Heart right ventricle (tissue), 16 donors: ENCODE measurements at regions of chr2 and their contacts with region 1.

Region 1: DNA sequence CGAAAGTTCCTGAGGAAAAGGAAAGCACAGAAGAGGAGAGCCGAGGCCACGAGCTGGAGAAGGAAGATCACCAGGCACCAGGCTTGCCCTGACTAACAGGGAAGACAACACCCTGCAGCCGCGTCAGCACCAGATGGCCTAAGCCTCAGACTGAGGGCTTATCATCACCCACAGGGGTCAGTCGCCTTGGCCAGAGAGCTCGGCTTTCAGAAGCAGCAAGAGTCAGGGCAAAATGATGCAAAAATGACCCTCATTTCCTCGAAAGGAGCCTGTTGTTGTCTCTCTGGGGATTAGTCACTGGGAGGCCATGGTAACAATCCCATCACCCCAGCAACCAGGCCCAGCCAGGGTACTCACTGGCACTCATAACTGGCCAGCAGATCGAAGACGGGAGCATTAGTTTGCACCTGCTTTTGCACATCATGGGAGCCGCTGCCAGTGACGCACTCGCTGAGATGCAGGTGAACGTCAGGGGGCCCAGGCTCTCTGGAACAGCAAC is 42.7 kb upstream of the ZFP36L2 start:
- DNase-seq: peak; percentile 79 to 80
- ATAC-seq: peak; percentile 73 to 85 (median 79)
- H3K4me3 ChIP-seq: peak overlapping the region in 3 of 10 donors; percentile 2 to 21 (median 12)
- H3K27ac ChIP-seq: peak overlapping the region; percentile 63 to 86 (median 75)
- H3K4me1 ChIP-seq: peaks cover 23 to 73% (median 68%) of the 10 kb centered on the region in 9 donors
- H3K27me3 ChIP-seq: no peaks in the 10 kb centered on the region
- CTCF ChIP-seq: peak in 4 of 9 donors; percentile 15 to 35 (median 22)

Region 2: GRCh38 chr2:43194121-43194869 is 74.8 kb before region 1 on chr2:
- intact Hi-C with region 1: no loop called
- DNase-seq: no peak
- ATAC-seq: no peak
- H3K4me3 ChIP-seq: peak overlapping the region in 1 of 10 donors; percentile 12
- H3K27ac ChIP-seq: peak overlapping the region in 1 of 10 donors; percentile 81
- H3K4me1 ChIP-seq: peaks cover 0 to 39% (median 0%) of the 10 kb centered on the region in 9 donors
- H3K27me3 ChIP-seq: no peaks in the 10 kb centered on the region
- CTCF ChIP-seq: no peak

Region 3: DNA sequence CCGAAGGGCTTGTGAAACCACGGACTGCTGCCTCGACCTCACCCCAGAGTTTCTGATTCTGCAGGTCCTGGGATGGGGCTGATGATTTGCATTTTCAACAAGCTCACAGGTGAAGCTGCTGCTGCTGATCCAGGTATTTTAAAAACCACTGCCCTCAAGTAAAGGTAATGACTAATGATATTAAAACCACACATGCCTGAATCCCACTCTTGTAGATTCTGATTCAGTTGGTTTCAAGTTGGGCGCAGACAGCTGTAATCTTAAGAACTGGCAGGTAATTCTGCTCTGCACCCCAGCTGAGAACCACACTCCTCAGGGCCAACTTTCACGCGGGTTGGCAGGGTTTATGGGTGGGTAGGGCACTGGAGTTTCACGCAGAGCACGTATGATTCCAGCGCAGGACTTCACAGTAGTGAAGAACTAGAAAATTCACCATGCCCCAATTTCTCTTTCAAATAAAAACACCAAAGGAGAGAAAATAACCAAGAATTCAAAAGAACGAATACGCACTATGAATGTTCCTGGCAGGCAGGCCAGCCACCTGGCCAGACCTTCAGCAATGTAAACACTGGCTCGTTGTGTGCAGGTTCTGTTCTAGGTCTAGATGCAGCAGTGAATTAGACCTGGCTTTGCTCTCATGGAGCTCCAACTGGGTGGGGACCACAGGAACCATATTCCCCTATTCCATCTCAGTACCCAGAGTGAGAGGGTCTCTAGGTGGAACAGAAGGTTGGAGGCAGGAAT is 31.9 kb after region 1 on chr2:
- intact Hi-C with region 1: loop called in 1 of 10 experiments (anchors 5 kb)
- DNase-seq: no peak
- ATAC-seq: no peak
- H3K4me3 ChIP-seq: no peak overlapping the region
- H3K27ac ChIP-seq: peak overlapping the region in 3 of 10 donors; percentile 19 to 90 (median 38)
- H3K4me1 ChIP-seq: peaks cover 10 to 56% (median 36%) of the 10 kb centered on the region in 9 donors
- H3K27me3 ChIP-seq: no peaks in the 10 kb centered on the region
- CTCF ChIP-seq: no peak

Region 4: DNA sequence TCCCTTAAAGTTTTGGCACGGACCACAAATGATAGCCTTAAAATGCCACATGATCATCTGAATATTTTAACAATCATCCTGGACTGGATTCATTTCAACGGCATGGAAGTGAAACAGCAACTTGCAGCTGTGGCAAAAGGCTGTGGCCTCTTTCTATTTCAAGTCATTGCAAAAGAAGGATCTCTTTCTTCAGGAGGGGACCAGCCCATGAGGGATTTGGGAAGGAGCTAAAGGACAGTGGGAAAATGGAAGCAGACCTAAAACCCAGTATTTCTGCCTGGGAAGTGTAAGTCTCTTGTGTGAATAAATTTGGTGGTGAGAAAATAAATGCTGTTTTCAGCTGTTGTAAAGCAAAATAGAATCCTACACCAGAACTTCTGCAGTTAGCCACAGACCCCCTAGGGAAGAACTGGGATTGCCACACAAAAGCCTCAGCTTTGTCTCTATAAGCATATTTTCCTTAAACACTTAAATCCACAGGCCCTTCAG is 64.6 kb after region 1 on chr2:
- intact Hi-C with region 1: loop called in 2 of 10 experiments (anchors 5 to 10 kb)
- DNase-seq: peak in 1 of 2 donors; percentile 64
- ATAC-seq: peak; percentile 28 to 74 (median 67)
- H3K4me3 ChIP-seq: peak overlapping the region in 3 of 10 donors; percentile 19 to 23 (median 23)
- H3K27ac ChIP-seq: peak overlapping the region; percentile 57 to 90 (median 86)
- H3K4me1 ChIP-seq: peaks cover 13 to 72% (median 55%) of the 10 kb centered on the region in 9 donors
- H3K27me3 ChIP-seq: no peaks in the 10 kb centered on the region
- CTCF ChIP-seq: no peak

Region 5: DNA sequence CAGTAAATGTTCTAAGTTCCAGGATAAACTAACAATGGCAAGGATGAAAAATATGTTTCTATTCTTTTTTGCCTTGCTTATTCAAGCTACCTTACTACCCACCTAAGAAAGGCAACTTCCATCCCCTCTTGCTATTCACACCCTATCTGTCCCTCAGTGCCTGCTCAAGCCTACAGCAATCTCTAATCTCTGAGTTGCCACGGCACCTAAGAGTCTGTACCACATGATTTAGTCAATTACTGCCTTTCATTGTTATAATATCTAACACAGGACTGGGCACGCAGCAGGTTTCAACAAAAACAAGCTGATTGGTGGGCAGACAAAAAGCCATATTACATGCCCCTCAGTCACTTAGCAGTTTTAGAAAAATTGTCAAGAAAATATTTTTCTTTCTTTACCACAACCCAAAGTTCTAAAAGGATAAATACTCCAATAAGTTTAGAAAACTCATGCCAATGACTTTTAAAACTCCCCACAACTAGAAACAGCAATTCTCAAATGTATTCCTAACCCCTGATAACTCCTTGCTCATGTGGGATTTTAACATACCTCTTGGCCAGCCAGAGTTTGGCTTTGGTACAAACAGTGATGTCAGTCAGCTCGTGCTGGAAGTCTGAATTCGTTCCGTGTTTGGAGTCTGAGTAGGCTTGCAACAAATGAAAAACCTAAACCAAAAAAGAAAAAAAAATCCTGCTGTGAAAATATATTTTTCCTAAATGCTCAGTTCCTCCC is 74.6 kb after region 1 on chr2:
- intact Hi-C with region 1: loop called in 2 of 10 experiments (anchors 5 to 10 kb)
- DNase-seq: peak; percentile 31 to 91
- ATAC-seq: peak; percentile 56 to 88 (median 80)
- H3K4me3 ChIP-seq: no peak overlapping the region
- H3K27ac ChIP-seq: peak overlapping the region; percentile 53 to 85 (median 82)
- H3K4me1 ChIP-seq: peaks cover 24 to 96% (median 76%) of the 10 kb centered on the region in 9 donors
- H3K27me3 ChIP-seq: no peaks in the 10 kb centered on the region
- CTCF ChIP-seq: no peak